Activated CD4-positive, alpha-beta memory T cell treated with anti-CD3 and anti-CD28 coated beads for 36 hours (primary cell): ENCODE measurements at regions of chr9 and their contacts with region 1.

Region 1: GRCh38 chr9:72473474-72474261 is 47.7 kb upstream of the TMC1 start:
- DNase-seq: no peak
- H3K4me3 Mint-ChIP-seq: no peak overlapping the region
- H3K27ac Mint-ChIP-seq: peak overlapping the region; percentile 79
- H3K4me1 Mint-ChIP-seq: peaks cover 41% of the 10 kb centered on the region
- H3K27me3 Mint-ChIP-seq: no peaks in the 10 kb centered on the region

Region 2: DNA sequence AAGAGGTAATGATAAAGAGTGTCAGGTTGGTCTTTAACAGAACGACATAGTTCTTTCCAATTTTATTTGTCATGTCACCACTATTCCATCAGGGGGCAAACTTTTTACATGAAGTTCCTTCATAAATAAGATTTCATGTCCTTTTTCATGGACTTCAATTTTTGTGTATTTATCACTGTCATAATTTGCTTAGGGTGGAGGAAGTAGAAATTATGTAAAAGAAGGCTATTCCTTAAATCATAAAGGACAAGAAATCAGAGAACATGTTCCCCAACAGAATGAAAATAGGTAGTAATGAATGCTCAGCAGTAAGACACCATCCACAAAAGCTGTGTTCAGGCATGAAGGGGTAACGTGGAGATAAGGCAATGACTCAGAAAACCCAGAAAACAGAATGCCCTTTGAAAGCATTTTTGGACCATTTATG is 181.4 kb before region 1 on chr9:
- CTCF ChIA-PET with region 1: no interaction called
- POLR2A ChIA-PET with region 1: no interaction called
- intact Hi-C with region 1: no loop called
- DNase-seq: no peak
- H3K4me3 Mint-ChIP-seq: no peak overlapping the region
- H3K27ac Mint-ChIP-seq: no peak overlapping the region
- H3K4me1 Mint-ChIP-seq: no peaks in the 10 kb centered on the region
- H3K27me3 Mint-ChIP-seq: peaks cover 7% of the 10 kb centered on the region

Region 3: GRCh38 chr9:72383978-72384709 is 89.5 kb before region 1 on chr9:
- CTCF ChIA-PET with region 1: no interaction called
- POLR2A ChIA-PET with region 1: no interaction called
- intact Hi-C with region 1: loop called (anchors 2 kb)
- DNase-seq: no peak
- H3K4me3 Mint-ChIP-seq: no peak overlapping the region
- H3K27ac Mint-ChIP-seq: no peak overlapping the region
- H3K4me1 Mint-ChIP-seq: peaks cover 7% of the 10 kb centered on the region
- H3K27me3 Mint-ChIP-seq: no peaks in the 10 kb centered on the region

Region 4: GRCh38 chr9:72443855-72444254 is 29.8 kb before region 1 on chr9:
- CTCF ChIA-PET with region 1: no interaction called
- POLR2A ChIA-PET with region 1: no interaction called
- intact Hi-C with region 1: loop called (anchors 1 kb)
- DNase-seq: peak; percentile 28
- H3K4me3 Mint-ChIP-seq: peak overlapping the region; percentile 25
- H3K27ac Mint-ChIP-seq: peak overlapping the region; percentile 83
- H3K4me1 Mint-ChIP-seq: peaks cover 28% of the 10 kb centered on the region
- H3K27me3 Mint-ChIP-seq: no peaks in the 10 kb centered on the region

Region 5: GRCh38 chr9:72509635-72510034 is 36.0 kb after region 1 on chr9:
- CTCF ChIA-PET with region 1: no interaction called
- POLR2A ChIA-PET with region 1: no interaction called
- intact Hi-C with region 1: loop called (anchors 1 kb)
- DNase-seq: no peak
- H3K4me3 Mint-ChIP-seq: no peak overlapping the region
- H3K27ac Mint-ChIP-seq: peak overlapping the region; percentile 86
- H3K4me1 Mint-ChIP-seq: peaks cover 19% of the 10 kb centered on the region
- H3K27me3 Mint-ChIP-seq: no peaks in the 10 kb centered on the region

Region 6: DNA sequence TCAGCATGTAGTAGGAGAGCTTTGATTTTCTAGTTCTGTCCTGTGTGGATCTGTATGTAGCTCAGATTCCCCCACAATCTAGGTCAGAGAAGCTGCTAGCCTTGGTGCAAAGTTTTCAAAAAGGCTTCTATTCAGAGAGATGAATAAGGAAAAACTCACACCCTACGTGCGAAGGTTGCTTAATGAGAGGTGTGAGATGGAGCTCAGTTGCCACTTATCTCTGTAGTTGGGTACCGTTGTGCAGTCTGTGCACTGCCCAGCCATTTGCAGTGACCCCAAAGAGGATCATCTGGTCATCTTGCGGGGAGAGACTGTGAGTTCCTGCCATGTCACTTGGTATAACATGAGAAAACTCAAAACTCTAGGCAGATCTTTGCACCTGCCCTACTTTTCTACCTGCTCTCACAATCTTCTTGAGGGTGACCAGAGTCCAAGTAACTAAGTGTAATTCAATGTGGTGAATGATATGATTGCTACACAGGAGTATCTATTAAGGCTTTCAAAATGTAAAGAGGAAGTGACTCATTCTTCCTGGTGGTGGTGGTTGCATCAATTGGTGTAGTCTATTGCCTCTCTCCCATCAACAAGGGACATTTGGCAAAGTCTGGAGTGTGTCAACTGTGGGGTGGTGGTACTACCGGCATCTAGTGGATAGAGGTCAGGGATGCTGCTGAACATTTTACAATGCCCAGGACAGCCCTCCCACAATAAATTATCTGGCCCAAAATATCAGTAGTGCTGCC is 112.9 kb after region 1 on chr9:
- CTCF ChIA-PET with region 1: no interaction called
- POLR2A ChIA-PET with region 1: no interaction called
- intact Hi-C with region 1: loop called (anchors 10 kb)
- DNase-seq: peak; percentile 44
- H3K4me3 Mint-ChIP-seq: no peak overlapping the region
- H3K27ac Mint-ChIP-seq: peak overlapping the region; percentile 50
- H3K4me1 Mint-ChIP-seq: peaks cover 47% of the 10 kb centered on the region
- H3K27me3 Mint-ChIP-seq: no peaks in the 10 kb centered on the region